GM12878 (cell line): ENCODE measurements at regions of chr6 and their contacts with region 1.

Region 1: DNA sequence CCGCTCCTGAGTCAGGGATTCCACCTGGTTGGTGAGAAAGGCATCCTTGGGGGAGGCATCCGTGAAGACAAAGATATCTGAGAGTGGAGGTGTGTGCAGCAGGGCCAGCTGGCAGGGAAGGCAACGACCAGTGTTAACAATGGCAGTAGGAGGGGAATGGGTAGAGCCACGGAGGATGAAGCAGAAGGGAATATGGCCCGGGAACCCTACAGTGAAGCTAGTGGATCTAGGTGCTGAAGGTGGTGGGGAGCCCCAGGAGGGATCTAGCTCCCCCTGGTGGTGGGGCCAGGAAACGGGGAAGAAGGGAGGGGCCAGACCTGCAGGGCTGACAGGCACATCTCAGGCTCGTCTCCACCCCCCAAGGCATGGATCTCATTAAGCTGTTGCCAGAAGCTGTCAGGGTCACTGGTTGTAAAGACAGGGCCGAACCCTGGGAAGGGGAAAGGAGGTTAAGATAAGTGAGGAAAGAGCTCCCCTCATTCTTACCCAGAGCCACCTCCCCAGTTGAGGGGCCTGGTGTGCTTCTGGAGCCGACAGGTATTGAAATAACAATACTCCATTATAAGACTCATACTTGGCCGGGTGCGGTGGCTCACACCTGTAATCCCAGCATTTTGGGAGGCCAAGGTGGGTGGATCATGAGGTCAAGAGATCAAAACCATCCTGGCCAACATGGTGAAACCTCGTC is 7.3 kb downstream of the VWA7 start:
- DNase-seq: peak; percentile 36
- ATAC-seq: peak; percentile 97
- H3K4me3 ChIP-seq: no peak overlapping the region
- H3K27ac ChIP-seq: no peak overlapping the region
- H3K4me1 ChIP-seq: no peaks in the 10 kb centered on the region
- H3K27me3 ChIP-seq: no peaks in the 10 kb centered on the region
- CTCF ChIP-seq: peak; percentile 91 to 95 (median 91)
- EP300 ChIP-seq: no peak
- POLR2A ChIP-seq: no peak
- RAD21 ChIP-seq: peak; percentile 72

Region 2: GRCh38 chr6:31680840-31681671 is 88.8 kb before region 1 on chr6 and contains the start of gene LY6G5C:
- CTCF ChIA-PET with region 1: interaction called, 11 read pairs
- POLR2A ChIA-PET with region 1: no interaction called
- RAD21 ChIA-PET with region 1: interaction called, 4 read pairs
- SMC1A ChIA-PET with region 1: interaction called, 6 read pairs
- in situ Hi-C with region 1: no loop called
- intact Hi-C with region 1: loop called (anchors 1 kb)
- DNase-seq: no peak
- ATAC-seq: peak; percentile 83
- H3K4me3 ChIP-seq: peak within 1 kb of the TSS; percentile 71
- H3K27ac ChIP-seq: peak within 1 kb of the TSS; percentile 15; the same call in 1 of the 2 replicates
- H3K4me1 ChIP-seq: peaks cover 6% of the 10 kb centered on the region
- H3K27me3 ChIP-seq: no peaks in the 10 kb centered on the region
- CTCF ChIP-seq: peak; percentile 74 to 91 (median 75)
- EP300 ChIP-seq: no peak
- POLR2A ChIP-seq: no peak
- RAD21 ChIP-seq: peak; percentile 93
- polyA plus RNA-seq, gene LY6G5C: 0.87 to 1.2 TPM

Region 3: GRCh38 chr6:31723245-31723979 is 46.4 kb before region 1 on chr6 and contains the start of gene MPIG6B:
- CTCF ChIA-PET with region 1: interaction called, 208 read pairs
- POLR2A ChIA-PET with region 1: no interaction called
- RAD21 ChIA-PET with region 1: interaction called, 44 read pairs
- SMC1A ChIA-PET with region 1: interaction called, 7 read pairs
- in situ Hi-C with region 1: no loop called
- intact Hi-C with region 1: loop called (anchors 2 kb)
- DNase-seq: no peak
- ATAC-seq: no peak
- H3K4me3 ChIP-seq: no peak within 1 kb of the TSS
- H3K27ac ChIP-seq: no peak within 1 kb of the TSS
- H3K4me1 ChIP-seq: peaks cover 15% of the 10 kb centered on the region
- H3K27me3 ChIP-seq: no peaks in the 10 kb centered on the region; a peak in 1 of 4 replicates
- CTCF ChIP-seq: no peak
- EP300 ChIP-seq: no peak
- POLR2A ChIP-seq: no peak
- RAD21 ChIP-seq: no peak
- polyA plus RNA-seq, gene MPIG6B: not detected

Region 4: GRCh38 chr6:31785475-31785874 is 15.6 kb after region 1 on chr6:
- CTCF ChIA-PET with region 1: interaction called, 17 read pairs
- POLR2A ChIA-PET with region 1: interaction called, 5 read pairs
- RAD21 ChIA-PET with region 1: interaction called, 12 read pairs
- SMC1A ChIA-PET with region 1: interaction called, 7 read pairs
- in situ Hi-C with region 1: no loop called
- intact Hi-C with region 1: no loop called
- DNase-seq: no peak
- ATAC-seq: no peak
- H3K4me3 ChIP-seq: no peak overlapping the region
- H3K27ac ChIP-seq: no peak overlapping the region
- H3K4me1 ChIP-seq: peaks cover 8% of the 10 kb centered on the region
- H3K27me3 ChIP-seq: no peaks in the 10 kb centered on the region
- CTCF ChIP-seq: no peak
- EP300 ChIP-seq: no peak
- POLR2A ChIP-seq: no peak
- RAD21 ChIP-seq: no peak

Region 5: DNA sequence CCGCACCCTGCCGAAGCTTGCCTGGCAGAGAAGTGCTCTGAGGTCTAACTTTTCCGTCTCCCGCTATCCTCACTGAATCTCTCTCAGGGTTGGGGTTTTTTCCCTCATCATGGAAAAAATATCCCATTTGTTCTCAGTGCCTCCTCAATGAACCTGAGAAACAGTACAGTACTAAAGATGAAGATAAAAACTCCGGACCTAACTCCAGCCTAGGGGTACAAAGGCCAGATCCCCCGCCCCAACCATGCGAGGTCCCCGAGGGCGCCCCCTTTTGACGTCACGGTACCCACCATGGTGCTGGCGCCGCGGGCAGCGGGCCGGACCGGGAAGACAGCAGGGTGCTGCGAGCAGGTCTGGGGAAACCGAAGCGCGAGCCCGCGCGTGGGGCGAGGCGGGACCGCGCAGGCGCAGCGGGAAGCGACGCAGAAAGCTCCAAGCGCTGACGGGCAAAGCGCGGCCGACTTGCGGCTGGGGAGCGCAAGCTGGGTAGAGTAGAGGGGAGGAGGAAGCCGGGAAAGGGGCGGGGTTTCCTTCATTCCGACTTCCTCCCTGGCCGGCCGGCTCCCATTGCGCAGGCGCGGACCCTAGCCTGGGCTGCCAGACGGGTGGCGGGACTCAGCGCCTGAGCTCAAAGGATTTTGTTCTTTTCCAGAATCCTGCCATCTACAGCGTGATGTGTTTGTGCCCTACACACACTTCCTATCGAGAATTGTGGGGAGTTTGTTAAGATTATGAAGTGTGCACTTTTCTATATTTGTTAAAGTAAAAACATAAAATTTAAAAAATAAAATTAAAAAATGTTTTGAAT is 36.8 kb after region 1 on chr6 and contains the start of gene LSM2:
- CTCF ChIA-PET with region 1: interaction called, 8 read pairs
- POLR2A ChIA-PET with region 1: no interaction called
- RAD21 ChIA-PET with region 1: interaction called, 7 read pairs
- SMC1A ChIA-PET with region 1: interaction called, 11 read pairs
- in situ Hi-C with region 1: no loop called
- intact Hi-C with region 1: no loop called
- DNase-seq: peak; percentile 74
- ATAC-seq: peak; percentile 98
- H3K4me3 ChIP-seq: peak within 1 kb of the TSS; percentile 92
- H3K27ac ChIP-seq: peak within 1 kb of the TSS; percentile 81
- H3K4me1 ChIP-seq: peaks cover 5% of the 10 kb centered on the region
- H3K27me3 ChIP-seq: no peaks in the 10 kb centered on the region
- CTCF ChIP-seq: peak; percentile 24 to 34 (median 24); a peak in 3 of 6 replicates
- EP300 ChIP-seq: no peak
- POLR2A ChIP-seq: peak; percentile 92
- RAD21 ChIP-seq: no peak
- polyA plus RNA-seq, gene LSM2: 245 to 248 TPM